HAP-1 (cell line): ENCODE measurements at regions of chrX and their contacts with region 1.

Region 1: GRCh38 chrX:104565791-104566680 is at the start of gene IL1RAPL2:
- DNase-seq: peak; percentile 15 to 76
- H3K4me3 ChIP-seq: no peak within 1 kb of the TSS; the same call in 1 of the 2 replicates
- H3K4me1 ChIP-seq: no peaks in the 10 kb centered on the region
- H3K27me3 ChIP-seq: peaks cover 49% of the 10 kb centered on the region

Region 2: DNA sequence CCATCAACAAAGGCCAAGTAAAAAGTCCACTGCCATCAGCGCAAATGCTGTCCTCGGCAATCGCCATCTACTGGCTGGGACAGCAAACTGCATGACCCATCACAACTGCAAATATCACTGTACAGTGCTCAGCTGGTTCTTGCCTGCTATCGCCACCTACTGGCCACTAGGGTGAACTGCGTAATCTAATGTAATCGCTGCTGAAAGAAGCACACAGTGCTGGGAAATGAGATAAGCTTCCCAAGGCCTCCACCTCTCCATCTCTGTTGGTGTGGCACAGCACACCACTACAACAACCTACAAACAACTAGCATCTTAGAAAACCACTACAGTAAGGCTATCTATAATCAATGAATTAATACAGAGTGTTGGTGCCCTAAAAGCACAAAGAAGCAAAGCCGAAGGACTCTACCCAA is 356.2 kb after region 1 on chrX:
- in situ Hi-C with region 1: loop called (anchors 10 kb)
- DNase-seq: peak; percentile 77 to 87
- H3K4me3 ChIP-seq: no peak overlapping the region
- H3K4me1 ChIP-seq: no peaks in the 10 kb centered on the region
- H3K27me3 ChIP-seq: 0 out of 2 replicates have a peak, but pooled peaks cover 2% of the 10 kb centered on the region

Region 3: DNA sequence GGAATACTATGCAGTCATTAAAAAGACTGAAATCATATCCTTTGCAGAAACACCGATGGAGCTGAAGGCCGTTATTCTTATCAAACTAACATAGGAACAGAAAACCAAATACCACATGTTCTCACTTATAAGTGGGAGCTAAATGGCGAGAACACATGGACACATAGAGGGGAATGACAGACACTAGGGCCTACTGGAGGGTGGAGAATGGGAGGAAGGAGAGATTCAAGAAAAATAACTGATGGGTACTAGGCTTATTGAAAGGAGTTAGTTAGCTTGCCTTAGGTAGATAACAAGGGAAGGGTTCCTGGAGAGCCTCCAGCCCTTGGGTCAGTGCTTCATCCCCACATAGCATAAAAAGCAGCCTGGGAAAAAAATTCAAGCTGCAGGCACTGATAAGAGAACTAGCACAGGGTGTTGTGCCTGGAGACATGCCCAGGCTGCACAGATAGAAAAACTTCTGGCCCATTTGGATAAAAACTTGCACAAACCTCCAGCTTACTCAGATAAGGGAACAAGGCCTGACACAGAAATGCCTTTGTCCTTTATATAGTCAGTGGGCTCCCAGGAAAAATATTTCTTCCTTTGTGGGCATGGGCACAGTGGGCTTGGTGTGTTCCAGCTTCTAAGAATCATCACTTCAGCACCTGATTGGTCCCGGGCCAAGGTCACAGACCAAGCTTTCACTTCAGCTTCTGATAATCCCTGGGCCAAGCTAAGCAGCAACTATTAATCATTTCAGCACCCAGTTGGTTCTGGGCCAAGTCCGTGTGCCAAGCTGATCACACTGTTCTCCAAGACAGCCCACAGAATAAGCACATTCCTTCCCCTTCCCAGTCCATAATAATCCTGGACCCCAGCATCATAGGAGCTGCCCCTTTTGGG is 1579.0 kb after region 1 on chrX:
- in situ Hi-C with region 1: no loop called
- DNase-seq: no peak
- H3K4me3 ChIP-seq: no peak overlapping the region
- H3K4me1 ChIP-seq: no peaks in the 10 kb centered on the region
- H3K27me3 ChIP-seq: no peaks in the 10 kb centered on the region